Naive thymus-derived CD4-positive, alpha-beta T cell (primary cell): ENCODE measurements at regions of chrX and their contacts with region 1.

Region 1: DNA sequence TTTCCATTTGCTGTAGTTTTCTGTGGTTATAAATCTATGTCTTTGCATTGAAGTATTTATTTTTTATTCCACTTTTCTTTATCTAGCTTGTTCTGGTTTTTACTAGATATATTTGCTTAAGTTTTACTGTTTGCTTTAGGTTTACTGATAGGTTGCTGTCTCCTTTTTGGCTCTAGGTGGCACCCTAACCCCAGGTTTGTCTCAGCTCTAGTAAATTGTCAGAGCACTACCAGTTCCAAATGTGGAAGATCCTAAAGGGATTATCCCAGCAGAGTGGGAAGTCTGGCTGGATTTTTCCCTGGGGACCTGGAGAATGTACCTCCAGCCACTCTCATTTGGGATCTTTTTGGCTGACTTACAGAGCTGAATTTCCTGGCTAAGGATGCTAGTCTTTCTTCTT is 106.1 kb downstream of the PBDC1 start:
- DNase-seq: peak; percentile 6 to 46 (median 19)
- ATAC-seq: no peak
- H3K4me3 ChIP-seq: no peak overlapping the region
- H3K4me3 Mint-ChIP-seq: no peak overlapping the region
- H3K27ac ChIP-seq: no peak overlapping the region
- H3K27ac Mint-ChIP-seq: no peak overlapping the region
- H3K4me1 ChIP-seq: no peaks in the 10 kb centered on the region
- H3K4me1 Mint-ChIP-seq: no peaks in the 10 kb centered on the region
- H3K27me3 ChIP-seq: no peaks in the 10 kb centered on the region
- H3K27me3 Mint-ChIP-seq: no peaks in the 10 kb centered on the region

Region 2: GRCh38 chrX:76454456-76454927 is 175.5 kb after region 1 on chrX:
- CTCF ChIA-PET with region 1: interaction called, 32 read pairs
- POLR2A ChIA-PET with region 1: no interaction called
- intact Hi-C with region 1: loop called in 1 of 2 experiments (anchors 1 kb)
- DNase-seq: peak in 6 of 9 donors; percentile 3 to 40 (median 30)
- ATAC-seq: peak; percentile 72
- H3K4me3 ChIP-seq: no peak overlapping the region
- H3K4me3 Mint-ChIP-seq: no peak overlapping the region
- H3K27ac ChIP-seq: no peak overlapping the region
- H3K27ac Mint-ChIP-seq: no peak overlapping the region
- H3K4me1 ChIP-seq: no peaks in the 10 kb centered on the region
- H3K4me1 Mint-ChIP-seq: peaks cover 0 to 12% (median 0%) of the 10 kb centered on the region in 7 donors
- H3K27me3 ChIP-seq: no peaks in the 10 kb centered on the region
- H3K27me3 Mint-ChIP-seq: no peaks in the 10 kb centered on the region

Region 3: DNA sequence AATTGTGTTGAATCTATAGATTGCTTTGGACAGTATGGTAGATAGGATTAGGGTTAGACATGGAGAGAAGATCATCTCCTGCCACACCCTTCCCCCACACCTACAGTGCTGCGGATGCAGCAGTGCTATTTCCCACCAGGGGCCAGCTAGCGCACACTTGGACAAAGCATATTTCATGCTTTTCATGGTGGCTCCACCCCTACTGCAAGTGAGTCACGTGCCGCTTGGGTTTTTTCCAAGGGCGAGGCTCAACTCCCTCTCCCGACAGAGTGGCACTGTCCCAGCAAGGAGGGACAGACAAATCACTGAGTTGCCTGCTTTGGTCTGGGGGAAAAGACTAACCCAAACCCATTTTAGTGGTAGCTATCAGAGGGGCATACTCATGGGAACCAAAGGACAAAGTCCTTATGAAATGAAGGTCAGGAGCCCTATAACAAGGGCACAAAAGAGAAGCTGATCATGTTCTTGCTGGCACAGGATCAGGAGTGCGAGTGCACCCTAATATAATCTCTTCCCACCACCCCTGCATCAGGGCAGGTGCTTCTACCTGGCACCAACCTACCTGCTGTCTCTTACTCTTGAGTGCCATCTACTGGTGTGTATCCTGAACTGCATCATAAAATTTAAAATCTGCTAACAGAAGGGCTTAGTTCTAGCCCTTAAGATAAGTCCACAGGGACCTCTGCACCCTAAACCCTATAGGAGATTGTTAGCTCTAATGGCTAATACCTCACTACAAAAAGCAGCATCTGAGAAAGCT is 1745.5 kb after region 1 on chrX:
- CTCF ChIA-PET with region 1: interaction called, 3 read pairs
- POLR2A ChIA-PET with region 1: no interaction called
- intact Hi-C with region 1: loop called in 1 of 2 experiments (anchors 1 kb)
- DNase-seq: peak in 7 of 9 donors; percentile 16 to 63 (median 59)
- ATAC-seq: peak; percentile 87
- H3K4me3 ChIP-seq: no peak overlapping the region
- H3K4me3 Mint-ChIP-seq: no peak overlapping the region
- H3K27ac ChIP-seq: no peak overlapping the region
- H3K27ac Mint-ChIP-seq: peak overlapping the region in 4 of 9 donors; percentile 5 to 42 (median 28)
- H3K4me1 ChIP-seq: no peaks in the 10 kb centered on the region
- H3K4me1 Mint-ChIP-seq: peaks cover 0 to 6% (median 5%) of the 10 kb centered on the region in 7 donors
- H3K27me3 ChIP-seq: no peaks in the 10 kb centered on the region
- H3K27me3 Mint-ChIP-seq: no peaks in the 10 kb centered on the region